Gastrocnemius medialis (tissue), 4 donors: ENCODE measurements at regions of chr5 and their contacts with region 1.

Region 1: GRCh38 chr5:14871210-14872069 is at the start of gene ANKH:
- DNase-seq: peak; percentile 38 to 74
- ATAC-seq: peak; percentile 76 to 78
- H3K4me3 ChIP-seq: peak within 1 kb of the TSS; percentile 69 to 88 (median 85)
- H3K27ac ChIP-seq: peak within 1 kb of the TSS; percentile 89 to 94 (median 92)
- H3K4me1 ChIP-seq: peaks cover 14% of the 10 kb centered on the region in 2 donors
- H3K27me3 ChIP-seq: no peaks in the 10 kb centered on the region
- CTCF ChIP-seq: peak in 2 of 5 experiments; percentile 17 to 41
- POLR2A ChIP-seq: peak; percentile 58 to 59
- total RNA-seq, gene ANKH: 33.5 to 52.1 (median 36.0) TPM

Region 2: GRCh38 chr5:14664302-14665100 is 206.9 kb before region 1 on chr5 and contains the start of gene OTULIN:
- in situ Hi-C with region 1: no loop called
- intact Hi-C with region 1: loop called (anchors 2 kb)
- DNase-seq: peak; percentile 78 to 85
- ATAC-seq: peak; percentile 93 to 94
- H3K4me3 ChIP-seq: peak within 1 kb of the TSS; percentile 54 to 83 (median 70)
- H3K27ac ChIP-seq: peak within 1 kb of the TSS; percentile 81 to 90 (median 86)
- H3K4me1 ChIP-seq: peaks cover 26 to 31% of the 10 kb centered on the region in 2 donors
- H3K27me3 ChIP-seq: no peaks in the 10 kb centered on the region
- CTCF ChIP-seq: peak in 1 of 5 experiments; percentile 8
- POLR2A ChIP-seq: peak; percentile 92 to 95
- total RNA-seq, gene OTULIN: 15.1 to 28.3 (median 20.2) TPM

Region 3: GRCh38 chr5:14685757-14686156 is 185.7 kb before region 1 on chr5:
- in situ Hi-C with region 1: no loop called
- intact Hi-C with region 1: loop called (anchors 5 kb)
- DNase-seq: no peak
- ATAC-seq: peak; percentile 67 to 68
- H3K4me3 ChIP-seq: no peak overlapping the region
- H3K27ac ChIP-seq: peak overlapping the region in 3 of 4 donors; percentile 37 to 67 (median 45)
- H3K4me1 ChIP-seq: peaks cover 31 to 33% of the 10 kb centered on the region in 2 donors
- H3K27me3 ChIP-seq: no peaks in the 10 kb centered on the region
- CTCF ChIP-seq: peak; percentile 55 to 71 (median 66)
- POLR2A ChIP-seq: no peak

Region 4: GRCh38 chr5:14753912-14754311 is 117.5 kb before region 1 on chr5:
- in situ Hi-C with region 1: loop called in 3 of 4 experiments (anchors 10 to 25 kb)
- intact Hi-C with region 1: loop called (anchors 2 kb)
- DNase-seq: peak in 1 of 2 donors; percentile 46
- ATAC-seq: peak; percentile 78 to 82
- H3K4me3 ChIP-seq: no peak overlapping the region
- H3K27ac ChIP-seq: peak overlapping the region; percentile 73 to 89 (median 87)
- H3K4me1 ChIP-seq: peaks cover 55 to 57% of the 10 kb centered on the region in 2 donors
- H3K27me3 ChIP-seq: no peaks in the 10 kb centered on the region
- CTCF ChIP-seq: no peak
- POLR2A ChIP-seq: no peak

Region 5: GRCh38 chr5:14882658-14883580 is 11.5 kb after region 1 on chr5:
- in situ Hi-C with region 1: no loop called
- intact Hi-C with region 1: no loop called
- DNase-seq: no peak
- ATAC-seq: no peak
- H3K4me3 ChIP-seq: no peak overlapping the region
- H3K27ac ChIP-seq: no peak overlapping the region
- H3K4me1 ChIP-seq: peaks cover 8 to 17% of the 10 kb centered on the region in 2 donors
- H3K27me3 ChIP-seq: no peaks in the 10 kb centered on the region
- CTCF ChIP-seq: no peak
- POLR2A ChIP-seq: no peak